Natural killer cell (primary cell): ENCODE measurements at regions of chr7 and their contacts with region 1.

Region 1: GRCh38 chr7:38215735-38216670 is 38.0 kb downstream of the STARD3NL start:
- DNase-seq: peak; percentile 78 to 93
- ATAC-seq: peak; percentile 58 to 86 (median 76)
- H3K4me3 ChIP-seq: no peak overlapping the region
- H3K4me3 Mint-ChIP-seq: peak overlapping the region; percentile 80
- H3K27ac ChIP-seq: peak overlapping the region; percentile 67
- H3K27ac Mint-ChIP-seq: peak overlapping the region; percentile 95 to 96
- H3K4me1 ChIP-seq: peaks cover 48% of the 10 kb centered on the region
- H3K4me1 Mint-ChIP-seq: peaks cover 52 to 60% of the 10 kb centered on the region in 2 donors
- H3K27me3 ChIP-seq: no peaks in the 10 kb centered on the region
- H3K27me3 Mint-ChIP-seq: no peaks in the 10 kb centered on the region
- CTCF ChIP-seq: peak; percentile 93

Region 2: GRCh38 chr7:38160003-38160571 is 55.9 kb before region 1 on chr7:
- intact Hi-C with region 1: no loop called
- DNase-seq: no peak
- ATAC-seq: no peak
- H3K4me3 ChIP-seq: no peak overlapping the region
- H3K4me3 Mint-ChIP-seq: no peak overlapping the region
- H3K27ac ChIP-seq: no peak overlapping the region
- H3K27ac Mint-ChIP-seq: no peak overlapping the region
- H3K4me1 ChIP-seq: no peaks in the 10 kb centered on the region
- H3K4me1 Mint-ChIP-seq: no peaks in the 10 kb centered on the region
- H3K27me3 ChIP-seq: no peaks in the 10 kb centered on the region
- H3K27me3 Mint-ChIP-seq: peaks cover 4 to 11% of the 10 kb centered on the region in 2 donors
- CTCF ChIP-seq: no peak

Region 3: DNA sequence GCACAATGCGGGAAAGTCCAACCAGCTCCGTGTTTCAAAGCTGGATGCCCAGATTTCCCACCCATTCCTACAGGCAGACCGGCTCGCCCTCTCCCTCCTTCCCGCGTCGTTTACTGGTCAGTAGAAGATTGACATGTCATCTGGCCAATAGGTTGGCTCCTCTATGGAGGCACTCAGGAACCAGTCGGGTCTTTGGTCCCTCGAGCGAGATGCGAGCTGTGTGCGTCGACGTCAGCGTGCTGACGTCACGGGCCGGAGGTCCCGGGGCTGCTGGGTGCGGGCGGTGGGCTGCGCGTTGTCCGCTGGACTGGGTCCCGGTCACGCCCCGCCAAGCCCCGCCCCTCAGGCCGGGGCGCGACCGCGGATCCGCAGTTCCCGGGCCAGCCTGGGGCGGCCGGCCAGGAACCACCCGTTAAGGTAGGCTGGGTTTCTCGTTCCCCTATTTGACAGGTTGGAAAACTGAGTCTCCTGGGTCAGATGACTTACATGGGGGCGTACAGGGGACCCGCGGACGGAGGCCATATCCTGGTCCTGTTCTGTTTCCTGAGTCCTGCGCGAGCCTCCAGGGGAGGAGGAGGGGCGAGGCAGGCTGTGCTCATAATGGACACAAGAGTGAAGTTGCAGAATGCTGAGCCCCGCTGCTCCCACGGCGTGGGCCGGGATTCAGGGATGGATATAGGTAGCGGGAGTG is 37.9 kb before region 1 on chr7 and contains the start of gene STARD3NL:
- intact Hi-C with region 1: loop called (anchors 2 kb)
- DNase-seq: peak; percentile 83 to 99
- ATAC-seq: peak; percentile 92 to 98 (median 96)
- H3K4me3 ChIP-seq: peak within 1 kb of the TSS; percentile 100
- H3K4me3 Mint-ChIP-seq: peak within 1 kb of the TSS; percentile 98
- H3K27ac ChIP-seq: peak within 1 kb of the TSS; percentile 98
- H3K27ac Mint-ChIP-seq: peak within 1 kb of the TSS; percentile 87 to 98
- H3K4me1 ChIP-seq: peaks cover 9% of the 10 kb centered on the region
- H3K4me1 Mint-ChIP-seq: peaks cover 43 to 49% of the 10 kb centered on the region in 2 donors
- H3K27me3 ChIP-seq: no peaks in the 10 kb centered on the region
- H3K27me3 Mint-ChIP-seq: peaks cover 7 to 15% of the 10 kb centered on the region in 2 donors
- CTCF ChIP-seq: peak; percentile 25
- total RNA-seq, gene STARD3NL: 30.6 to 38.6 (median 38.3) TPM

Region 4: DNA sequence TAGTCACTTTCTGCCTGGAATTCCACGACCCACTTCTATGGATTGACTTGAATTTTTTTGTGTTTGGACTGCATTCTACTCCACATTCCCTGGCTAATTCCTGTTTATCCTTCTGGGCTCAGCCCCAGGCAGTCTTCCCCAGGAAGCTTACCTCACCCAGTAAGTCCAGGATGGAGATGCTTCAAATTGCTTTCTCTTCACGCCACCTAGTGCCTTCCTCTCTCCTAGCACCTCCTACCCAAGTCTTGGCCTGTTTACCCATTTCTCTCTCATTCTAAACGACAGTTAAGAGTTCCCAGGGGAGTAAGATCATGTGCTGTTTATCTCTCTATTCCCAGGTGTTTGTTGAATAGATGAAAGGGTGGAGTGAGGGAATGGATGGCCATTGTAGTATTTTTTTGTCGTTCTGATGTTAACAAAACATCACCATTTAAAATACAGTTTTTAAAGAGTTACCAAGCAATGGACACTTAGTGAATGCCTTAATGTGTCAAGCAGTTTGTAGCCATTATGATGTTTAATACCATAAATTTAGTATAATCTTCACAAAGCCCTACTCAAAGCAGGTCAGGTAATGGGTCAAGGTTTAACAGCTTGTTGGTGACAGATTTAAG is 102.9 kb after region 1 on chr7:
- intact Hi-C with region 1: loop called (anchors 1 kb)
- DNase-seq: peak in 1 of 2 donors; percentile 66
- ATAC-seq: peak; percentile 26 to 56 (median 36)
- H3K4me3 ChIP-seq: peak overlapping the region; percentile 69
- H3K4me3 Mint-ChIP-seq: peak overlapping the region; percentile 97
- H3K27ac ChIP-seq: peak overlapping the region; percentile 97
- H3K27ac Mint-ChIP-seq: peak overlapping the region; percentile 95 to 99
- H3K4me1 ChIP-seq: peaks cover 65% of the 10 kb centered on the region
- H3K4me1 Mint-ChIP-seq: peaks cover 90 to 91% of the 10 kb centered on the region in 2 donors
- H3K27me3 ChIP-seq: no peaks in the 10 kb centered on the region
- H3K27me3 Mint-ChIP-seq: no peaks in the 10 kb centered on the region
- CTCF ChIP-seq: peak; percentile 77

Region 5: GRCh38 chr7:38535073-38535472 is 319.1 kb after region 1 on chr7:
- intact Hi-C with region 1: no loop called
- DNase-seq: no peak
- ATAC-seq: no peak
- H3K4me3 ChIP-seq: no peak overlapping the region
- H3K4me3 Mint-ChIP-seq: no peak overlapping the region
- H3K27ac ChIP-seq: no peak overlapping the region
- H3K27ac Mint-ChIP-seq: no peak overlapping the region
- H3K4me1 ChIP-seq: peaks cover 2% of the 10 kb centered on the region
- H3K4me1 Mint-ChIP-seq: peaks cover 8% of the 10 kb centered on the region in 2 donors
- H3K27me3 ChIP-seq: no peaks in the 10 kb centered on the region
- H3K27me3 Mint-ChIP-seq: peaks cover 3 to 22% of the 10 kb centered on the region in 2 donors
- CTCF ChIP-seq: no peak